Cardiac septum (tissue), 1 donor: ENCODE measurements at regions of chr2 and their contacts with region 1.

Region 1: DNA sequence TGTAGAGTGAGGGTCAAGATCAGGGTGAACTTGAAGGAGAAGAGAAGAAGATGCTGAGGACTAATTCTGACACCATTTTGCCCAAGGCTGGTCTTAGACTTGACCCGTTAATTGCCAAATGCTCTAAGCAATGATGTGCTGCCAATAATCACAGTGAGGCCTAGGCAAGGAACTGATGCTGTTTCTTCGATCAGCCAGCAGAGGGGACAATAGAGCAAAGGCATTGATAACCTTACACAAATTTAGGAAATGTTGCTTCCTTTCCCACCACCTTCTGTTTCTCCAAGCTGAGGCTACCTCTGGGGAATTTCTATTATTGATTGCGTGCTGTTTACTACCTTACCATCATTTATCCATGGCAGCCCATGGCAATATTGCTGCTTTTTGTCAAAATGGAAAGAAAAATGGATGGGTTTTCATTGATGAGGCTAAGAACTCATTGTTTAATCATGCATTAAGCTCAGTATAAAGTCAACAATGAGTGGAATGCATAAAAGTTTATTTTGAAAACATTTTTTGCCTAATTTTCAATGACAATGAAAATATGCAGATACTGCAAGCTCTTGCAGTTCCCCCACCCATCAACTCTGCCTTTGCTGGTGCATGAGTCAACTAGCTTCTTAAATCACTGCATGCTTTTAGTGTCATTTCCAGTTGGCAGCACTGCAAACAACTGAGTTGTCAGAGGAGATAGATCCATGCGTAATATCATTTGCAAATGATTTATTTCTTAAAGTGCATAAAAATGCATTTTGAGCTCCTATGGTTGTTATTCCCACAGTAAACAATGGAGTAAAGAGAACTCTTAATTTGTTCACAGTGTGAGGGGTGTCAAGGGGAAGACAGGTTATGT is 116.4 kb upstream of the NYAP2 start:
- DNase-seq: no peak

Region 2: DNA sequence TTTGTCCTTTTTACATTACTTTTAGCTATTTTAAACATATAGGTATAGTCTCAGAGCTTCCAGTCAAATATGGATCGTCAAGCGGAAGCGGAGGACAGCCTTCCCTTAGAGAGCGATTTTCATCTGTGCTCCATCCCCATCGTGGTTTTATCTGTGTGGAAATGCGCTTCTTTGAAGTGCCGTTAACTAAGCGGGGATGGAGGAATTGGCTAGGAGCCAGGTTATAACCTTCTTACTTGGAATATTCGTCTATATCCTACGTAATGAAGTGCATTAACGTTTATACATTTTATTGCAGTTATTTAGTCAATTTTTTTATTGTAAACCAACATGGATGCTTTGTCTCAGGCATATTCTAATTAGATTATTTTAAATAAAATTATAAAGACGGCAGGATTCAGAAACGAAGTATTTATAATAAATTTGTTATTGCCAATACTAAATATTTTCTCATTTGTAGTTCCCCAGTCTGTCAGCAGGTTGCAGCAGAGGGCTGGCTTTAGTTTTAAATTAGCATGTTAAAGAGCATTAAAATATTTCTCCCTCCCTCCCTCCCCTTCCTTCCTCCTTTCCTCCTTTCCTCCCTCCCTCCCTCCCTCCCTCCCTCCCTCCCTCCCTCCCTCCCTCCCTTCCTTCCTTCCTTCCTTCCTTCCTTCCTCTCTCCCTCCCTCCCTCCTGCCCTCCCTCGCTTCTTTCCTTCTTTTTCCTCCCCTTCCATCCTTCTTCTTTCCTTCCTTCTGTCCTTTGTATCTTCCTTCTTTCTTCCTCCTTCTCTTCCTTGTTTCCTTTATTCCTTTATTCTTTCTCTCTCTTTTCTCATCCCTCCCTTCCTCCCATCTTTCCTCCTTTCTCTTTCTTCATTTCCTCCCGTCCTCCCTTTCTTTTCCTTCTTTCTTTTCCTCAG is 160.2 kb before region 1 on chr2:
- intact Hi-C with region 1: no loop called
- DNase-seq: no peak

Region 3: GRCh38 chr2:225270053-225270452 is 13.0 kb before region 1 on chr2:
- intact Hi-C with region 1: no loop called
- DNase-seq: no peak

Region 4: GRCh38 chr2:225650041-225650440 is 367.0 kb after region 1 on chr2:
- intact Hi-C with region 1: loop called (anchors 10 kb)
- DNase-seq: no peak

Region 5: GRCh38 chr2:226185616-226186211 is 902.6 kb after region 1 on chr2:
- intact Hi-C with region 1: no loop called
- DNase-seq: no peak